MCF 10A (cell line): ENCODE measurements at regions of chr3 and their contacts with region 1.

Region 1: DNA sequence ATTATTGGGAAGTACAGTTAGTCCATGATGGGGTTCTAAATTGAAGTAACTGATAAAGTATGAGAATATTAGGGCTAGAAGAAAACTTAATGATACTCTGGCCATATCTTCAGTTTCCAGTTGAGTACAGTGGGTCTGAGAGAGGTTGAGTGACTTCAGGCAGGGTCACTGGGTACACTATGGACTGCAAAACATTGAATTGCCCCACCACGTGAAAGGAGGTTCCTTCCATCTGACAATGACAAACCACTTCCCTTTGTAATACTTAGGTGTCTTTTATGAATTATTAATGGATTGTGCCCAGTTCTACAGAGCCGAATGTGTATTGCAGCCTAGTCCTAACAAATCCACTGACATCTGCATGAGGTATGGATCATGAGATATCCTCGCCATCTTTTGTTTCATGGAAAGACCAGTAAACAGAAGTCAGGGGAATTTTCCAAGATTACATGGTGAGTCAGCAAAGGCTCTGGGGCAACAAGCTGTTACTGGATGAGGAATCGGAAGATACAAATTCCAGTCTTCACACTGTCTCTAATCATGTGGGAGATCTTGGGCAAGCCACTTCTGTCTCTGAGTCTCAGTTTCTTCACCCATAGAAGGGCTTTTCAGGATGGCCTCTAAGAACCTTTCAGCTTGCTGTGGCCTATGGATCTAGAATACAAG is 66.5 kb upstream of the BCL6 start:
- DNase-seq: peak; percentile 83
- H3K4me3 Mint-ChIP-seq: no peak overlapping the region
- H3K27ac Mint-ChIP-seq: peak overlapping the region; percentile 44
- H3K4me1 Mint-ChIP-seq: peaks cover 31% of the 10 kb centered on the region
- H3K27me3 Mint-ChIP-seq: no peaks in the 10 kb centered on the region
- CTCF ChIP-seq: no peak

Region 2: GRCh38 chr3:187763850-187764648 is 47.7 kb before region 1 on chr3:
- CTCF ChIA-PET with region 1: no interaction called
- POLR2A ChIA-PET with region 1: interaction called, 10 read pairs
- intact Hi-C with region 1: no loop called
- DNase-seq: no peak
- H3K4me3 Mint-ChIP-seq: no peak overlapping the region
- H3K27ac Mint-ChIP-seq: no peak overlapping the region
- H3K4me1 Mint-ChIP-seq: peaks cover 5% of the 10 kb centered on the region
- H3K27me3 Mint-ChIP-seq: no peaks in the 10 kb centered on the region
- CTCF ChIP-seq: no peak

Region 3: GRCh38 chr3:187878776-187879518 is 67.2 kb after region 1 on chr3:
- CTCF ChIA-PET with region 1: no interaction called
- POLR2A ChIA-PET with region 1: interaction called, 10 read pairs
- intact Hi-C with region 1: no loop called
- DNase-seq: peak; percentile 28
- H3K4me3 Mint-ChIP-seq: peak overlapping the region; percentile 49
- H3K27ac Mint-ChIP-seq: peak overlapping the region; percentile 29
- H3K4me1 Mint-ChIP-seq: peaks cover 23% of the 10 kb centered on the region
- H3K27me3 Mint-ChIP-seq: no peaks in the 10 kb centered on the region
- CTCF ChIP-seq: no peak

Region 4: GRCh38 chr3:187913617-187914291 is 102.0 kb after region 1 on chr3:
- CTCF ChIA-PET with region 1: interaction called, 3 read pairs
- POLR2A ChIA-PET with region 1: interaction called, 10 read pairs
- intact Hi-C with region 1: no loop called
- DNase-seq: peak; percentile 76
- H3K4me3 Mint-ChIP-seq: no peak overlapping the region
- H3K27ac Mint-ChIP-seq: peak overlapping the region; percentile 32
- H3K4me1 Mint-ChIP-seq: peaks cover 21% of the 10 kb centered on the region
- H3K27me3 Mint-ChIP-seq: no peaks in the 10 kb centered on the region
- CTCF ChIP-seq: no peak

Region 5: GRCh38 chr3:188000361-188000861 is 188.7 kb after region 1 on chr3:
- CTCF ChIA-PET with region 1: no interaction called
- POLR2A ChIA-PET with region 1: no interaction called
- intact Hi-C with region 1: no loop called
- DNase-seq: no peak
- H3K4me3 Mint-ChIP-seq: no peak overlapping the region
- H3K27ac Mint-ChIP-seq: no peak overlapping the region
- H3K4me1 Mint-ChIP-seq: no peaks in the 10 kb centered on the region
- H3K27me3 Mint-ChIP-seq: no peaks in the 10 kb centered on the region
- CTCF ChIP-seq: no peak

Region 6: DNA sequence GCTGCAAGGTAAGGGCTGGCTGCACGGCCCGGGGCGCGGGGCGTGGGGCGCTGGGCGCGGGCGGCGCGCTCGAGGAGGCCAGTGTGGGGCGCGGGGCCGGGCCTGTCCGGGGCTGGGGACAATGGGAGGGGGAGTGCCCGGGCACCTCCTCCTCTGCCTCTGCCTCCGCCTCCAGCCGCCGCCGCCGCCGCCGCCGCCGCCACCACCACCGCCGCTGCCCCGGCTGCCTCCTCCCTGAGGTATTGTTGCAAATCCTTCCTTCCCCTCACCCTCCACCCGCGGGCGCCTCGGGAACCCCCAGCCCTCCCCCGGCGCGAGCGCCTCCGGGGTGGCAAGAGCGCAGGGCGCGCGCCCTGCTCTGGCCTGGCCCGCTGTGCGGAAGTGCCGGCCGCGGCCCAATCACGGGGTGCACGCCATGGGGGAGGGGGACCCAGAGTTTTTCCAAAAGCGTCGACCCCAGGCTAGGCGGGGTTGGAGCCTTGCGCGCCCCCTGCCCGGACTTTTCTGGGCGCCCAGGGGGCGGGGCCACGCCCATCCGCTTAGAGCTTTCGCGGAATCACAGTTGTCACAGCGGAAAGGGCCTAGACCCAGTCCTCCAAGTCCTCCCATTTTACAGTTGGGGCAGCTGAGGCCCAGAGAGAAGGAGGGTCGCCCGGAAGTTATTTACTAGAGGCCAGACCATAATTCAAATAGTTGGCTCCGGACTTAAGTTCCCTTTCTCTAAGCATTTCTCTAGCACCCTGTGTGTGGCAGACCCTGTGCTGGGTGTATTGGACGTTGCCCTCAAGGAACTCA is 342.5 kb after region 1 on chr3 and contains the start of gene LPP:
- CTCF ChIA-PET with region 1: interaction called, 4 read pairs
- POLR2A ChIA-PET with region 1: interaction called, 15 read pairs
- intact Hi-C with region 1: no loop called
- DNase-seq: peak; percentile 67
- H3K4me3 Mint-ChIP-seq: peak within 1 kb of the TSS; percentile 90
- H3K27ac Mint-ChIP-seq: peak within 1 kb of the TSS; percentile 96
- H3K4me1 Mint-ChIP-seq: peaks cover 42% of the 10 kb centered on the region
- H3K27me3 Mint-ChIP-seq: no peaks in the 10 kb centered on the region
- CTCF ChIP-seq: no peak
- total RNA-seq, gene LPP: 107 and 117 TPM in 2 replicates